ENCODE measurements at regions of chr12 and their contacts with region 1.

Region 1: DNA sequence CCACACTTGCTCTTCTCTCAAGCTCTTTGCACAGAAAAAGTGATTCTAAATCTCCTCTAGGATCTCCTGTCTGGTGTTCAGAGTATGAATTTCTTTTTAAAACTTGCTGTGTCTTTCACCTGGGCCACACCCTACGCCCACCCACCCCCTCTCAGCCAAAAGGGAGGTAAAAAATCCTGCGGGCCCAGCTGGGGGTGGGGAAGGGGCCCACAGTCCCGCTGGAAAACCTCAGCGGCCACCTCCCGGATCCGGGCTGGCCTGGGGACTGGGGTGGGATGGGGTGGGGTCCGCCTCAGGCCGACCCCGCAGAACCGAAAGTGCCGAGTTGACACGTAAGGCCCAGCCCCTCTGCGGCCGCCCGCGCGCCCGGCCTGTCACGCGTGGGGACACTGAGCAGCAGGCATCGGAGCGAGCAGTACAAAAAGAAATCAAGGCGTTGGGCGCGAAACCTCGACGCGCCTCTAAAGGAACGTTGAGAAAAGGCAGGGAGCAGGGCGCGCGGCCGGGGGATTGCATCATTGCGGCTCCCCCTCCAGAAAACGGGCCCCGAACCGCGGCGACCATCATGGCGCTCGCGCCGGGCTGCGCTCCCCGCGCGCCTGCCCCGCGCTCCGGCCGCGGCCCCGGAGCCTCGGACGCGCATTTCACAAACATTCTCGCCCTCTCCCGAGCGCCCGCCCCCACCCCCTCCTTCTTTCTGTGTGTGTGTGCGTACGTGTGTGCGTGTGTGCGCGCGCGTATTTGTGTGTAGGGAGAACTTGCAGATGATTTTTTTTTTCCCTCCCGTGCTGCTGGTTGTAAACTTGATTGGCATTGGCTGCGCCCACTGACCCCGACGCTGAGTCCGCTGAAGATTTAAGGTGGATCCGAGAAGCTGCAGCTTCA is 7.7 kb downstream of the CDKN1B start:
- DNase-seq: peak; percentile 87 to 94 (median 93)
- H3K4me3 ChIP-seq: peak overlapping the region; percentile 69 to 86 (median 84)
- H3K4me3 Mint-ChIP-seq: peak overlapping the region; percentile 95 to 96
- H3K27ac ChIP-seq: peak overlapping the region; percentile 93 to 96
- H3K27ac Mint-ChIP-seq: peak overlapping the region; percentile 94 to 99 (median 98)
- H3K4me1 ChIP-seq: peaks cover 36 to 54% of the 10 kb centered on the region in 2 donors
- H3K4me1 Mint-ChIP-seq: peaks cover 54% of the 10 kb centered on the region
- H3K27me3 ChIP-seq: no peaks in the 10 kb centered on the region
- H3K27me3 Mint-ChIP-seq: peaks cover 0 to 6% (median 0%) of the 10 kb centered on the region in 3 donors
- CTCF ChIP-seq: no peak

Region 2: GRCh38 chr12:12356886-12357718 is 367.8 kb before region 1 on chr12 and contains the start of gene BORCS5:
- intact Hi-C with region 1: loop called in 1 of 2 experiments (anchors 10 kb)
- DNase-seq: peak; percentile 97 to 98 (median 98)
- H3K4me3 ChIP-seq: peak within 1 kb of the TSS; percentile 67 to 84 (median 76)
- H3K4me3 Mint-ChIP-seq: peak within 1 kb of the TSS; percentile 90 to 96
- H3K27ac ChIP-seq: peak within 1 kb of the TSS; percentile 90 to 96
- H3K27ac Mint-ChIP-seq: peak within 1 kb of the TSS; percentile 97 to 99 (median 98)
- H3K4me1 ChIP-seq: peaks cover 18 to 24% of the 10 kb centered on the region in 2 donors
- H3K4me1 Mint-ChIP-seq: peaks cover 30% of the 10 kb centered on the region
- H3K27me3 ChIP-seq: no peaks in the 10 kb centered on the region
- H3K27me3 Mint-ChIP-seq: peaks cover 0 to 5% (median 3%) of the 10 kb centered on the region in 3 donors
- CTCF ChIP-seq: no peak
- polyA plus RNA-seq, gene BORCS5: 8.5 to 15.1 (median 9.6) TPM

Region 3: DNA sequence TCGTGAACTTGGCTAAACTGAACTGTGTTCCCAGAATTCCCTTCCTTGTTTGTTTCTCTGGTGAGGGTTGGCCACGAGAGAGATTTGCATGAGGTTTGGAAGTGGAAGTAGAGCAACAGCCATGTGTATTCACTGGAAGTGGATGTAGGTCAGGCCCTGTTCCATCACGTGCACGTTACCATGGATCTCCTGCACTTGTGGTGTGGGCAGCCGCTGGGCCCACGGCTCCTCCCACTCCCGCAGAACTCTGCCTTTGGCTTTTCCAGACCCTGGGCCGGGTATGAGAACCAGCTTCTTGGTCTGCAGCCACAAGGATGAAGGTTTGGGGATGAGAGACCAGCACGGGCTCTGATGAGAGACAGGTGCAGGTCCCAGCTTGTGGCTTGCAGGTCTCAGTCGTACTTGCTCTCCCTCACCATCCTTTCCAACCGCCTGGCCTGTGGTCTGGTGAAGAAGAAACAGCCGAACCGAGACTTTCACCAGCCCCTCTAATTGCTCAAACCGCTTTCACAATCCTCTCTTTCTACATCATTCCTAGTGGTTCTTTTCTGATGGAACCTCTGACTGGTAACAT is 257.1 kb before region 1 on chr12:
- intact Hi-C with region 1: no loop called
- DNase-seq: peak in 2 of 3 donors; percentile 30 to 31
- H3K4me3 ChIP-seq: no peak overlapping the region
- H3K4me3 Mint-ChIP-seq: peak overlapping the region; percentile 26 to 42
- H3K27ac ChIP-seq: peak overlapping the region in 1 of 2 donors; percentile 14
- H3K27ac Mint-ChIP-seq: peak overlapping the region in 5 of 7 donors; percentile 3 to 76 (median 26)
- H3K4me1 ChIP-seq: peaks cover 12 to 13% of the 10 kb centered on the region in 2 donors
- H3K4me1 Mint-ChIP-seq: peaks cover 21% of the 10 kb centered on the region
- H3K27me3 ChIP-seq: no peaks in the 10 kb centered on the region
- H3K27me3 Mint-ChIP-seq: peaks cover 0 to 5% (median 1%) of the 10 kb centered on the region in 3 donors
- CTCF ChIP-seq: no peak